Activated CD4-positive, alpha-beta T cell treated with anti-CD3 and anti-CD28 coated beads for 36 hours (primary cell): ENCODE measurements at regions of chr17 and their contacts with region 1.

Region 1: GRCh38 chr17:37392024-37392590 is 14.5 kb downstream of the ACACA start:
- DNase-seq: no peak
- ATAC-seq: peak; percentile 87
- H3K4me3 Mint-ChIP-seq: no peak overlapping the region
- H3K27ac Mint-ChIP-seq: no peak overlapping the region
- H3K4me1 Mint-ChIP-seq: peaks cover 21% of the 10 kb centered on the region
- H3K27me3 Mint-ChIP-seq: no peaks in the 10 kb centered on the region

Region 2: DNA sequence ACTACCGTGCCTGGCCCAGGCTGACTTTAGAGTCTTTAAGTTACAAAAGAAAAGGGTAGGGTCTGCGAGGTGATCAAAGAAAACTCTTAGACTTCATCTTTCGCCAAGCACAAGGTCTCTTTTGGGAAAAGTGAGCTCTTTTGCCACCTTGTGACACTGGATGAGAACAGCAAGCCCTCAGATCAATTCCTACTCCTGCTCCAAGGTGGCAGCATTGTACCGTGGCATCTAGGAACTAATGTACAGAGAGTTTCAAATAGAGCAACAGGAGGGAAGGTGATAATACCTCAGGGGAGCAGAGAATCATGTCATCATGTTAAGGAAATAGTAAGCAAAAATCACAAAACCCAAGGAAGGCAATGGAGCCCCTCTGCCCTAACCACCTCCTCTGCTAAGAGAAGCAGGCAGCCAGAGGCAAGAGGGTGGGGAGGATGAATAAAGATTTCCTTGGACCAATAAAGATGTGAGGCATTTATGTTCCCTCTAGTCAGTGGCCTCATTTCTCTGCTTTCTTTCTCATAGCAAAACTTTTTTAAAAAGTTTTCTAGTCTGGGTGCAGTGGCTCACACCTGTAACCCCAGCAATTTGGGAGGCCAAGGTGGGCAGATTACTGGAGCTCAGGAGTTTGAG is 18.5 kb before region 1 on chr17:
- CTCF ChIA-PET with region 1: interaction called, 22 read pairs
- POLR2A ChIA-PET with region 1: no interaction called
- intact Hi-C with region 1: loop called (anchors 1 kb)
- DNase-seq: peak; percentile 82
- ATAC-seq: peak; percentile 98
- H3K4me3 Mint-ChIP-seq: no peak overlapping the region
- H3K27ac Mint-ChIP-seq: no peak overlapping the region
- H3K4me1 Mint-ChIP-seq: peaks cover 5% of the 10 kb centered on the region
- H3K27me3 Mint-ChIP-seq: no peaks in the 10 kb centered on the region